HepG2 (cell line): ENCODE measurements at regions of chr1 and their contacts with region 1.

Region 1: DNA sequence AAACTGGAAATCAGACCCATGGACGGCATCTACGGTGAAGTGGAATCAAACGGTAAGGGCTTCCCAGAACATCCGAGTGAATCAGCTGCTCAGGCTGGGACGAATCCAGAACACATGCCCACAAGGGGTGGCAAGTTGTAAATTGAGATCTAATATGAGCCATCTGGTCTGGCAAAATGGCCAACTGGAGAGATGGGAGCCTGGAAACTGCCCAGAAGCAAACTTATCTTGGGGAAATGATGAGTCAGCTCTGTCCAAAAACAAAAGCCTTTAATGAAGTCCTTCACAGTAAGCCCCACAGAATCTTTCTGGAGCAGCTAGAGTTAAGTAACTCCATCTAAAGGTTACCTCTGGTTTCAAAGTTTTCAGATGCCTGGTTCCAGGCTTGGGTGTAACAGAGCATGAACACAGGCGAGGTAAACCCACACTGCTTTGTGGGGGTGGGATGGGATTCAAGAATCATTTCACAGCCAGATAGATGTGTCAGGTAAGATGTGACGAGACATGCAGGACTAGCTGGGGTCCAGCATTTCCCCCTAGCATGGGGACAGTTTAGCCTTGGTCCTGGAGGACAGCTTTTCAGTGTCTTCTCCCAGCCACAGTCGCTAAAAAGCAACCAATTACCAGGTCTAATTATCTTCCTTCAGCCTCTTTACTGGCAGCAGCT is 10.5 kb upstream of the SRP9 start:
- DNase-seq: peak; percentile 56
- ATAC-seq: peak; percentile 1; the same call in 2 of the 3 replicates
- H3K4me3 ChIP-seq: peak overlapping the region; percentile 14 to 69 (median 52)
- H3K27ac ChIP-seq: peak overlapping the region; percentile 79
- H3K4me1 ChIP-seq: peaks cover 90% of the 10 kb centered on the region
- H3K27me3 ChIP-seq: no peaks in the 10 kb centered on the region
- CTCF ChIP-seq: no peak
- EP300 ChIP-seq: no peak
- POLR2A ChIP-seq: peak in 1 of 2 experiments; percentile 50; a peak in 2 of 4 replicates
- RAD21 ChIP-seq: no peak

Region 2: GRCh38 chr1:225670806-225671733 is 96.0 kb before region 1 on chr1:
- CTCF ChIA-PET with region 1: no interaction called
- POLR2A ChIA-PET with region 1: interaction called, 19 read pairs
- in situ Hi-C with region 1: no loop called
- intact Hi-C with region 1: no loop called
- DNase-seq: peak; percentile 97
- ATAC-seq: peak; percentile 96
- H3K4me3 ChIP-seq: peak overlapping the region in 1 of 3 experiments; percentile 30; a peak in 1 of 6 replicates
- H3K27ac ChIP-seq: peak overlapping the region; percentile 63
- H3K4me1 ChIP-seq: peaks cover 27% of the 10 kb centered on the region
- H3K27me3 ChIP-seq: no peaks in the 10 kb centered on the region
- CTCF ChIP-seq: no peak
- EP300 ChIP-seq: peak; percentile 27 to 86; a peak in 3 of 4 replicates
- POLR2A ChIP-seq: peak in 1 of 2 experiments; percentile 35; a peak in 1 of 4 replicates
- RAD21 ChIP-seq: no peak

Region 3: GRCh38 chr1:225700164-225700740 is 66.8 kb before region 1 on chr1:
- CTCF ChIA-PET with region 1: no interaction called
- POLR2A ChIA-PET with region 1: interaction called, 49 read pairs
- in situ Hi-C with region 1: no loop called
- intact Hi-C with region 1: loop called (anchors 2 kb)
- DNase-seq: peak; percentile 100
- ATAC-seq: peak; percentile 90
- H3K4me3 ChIP-seq: peak overlapping the region in 2 of 3 experiments; percentile 14 to 26; a peak in 2 of 6 replicates
- H3K27ac ChIP-seq: peak overlapping the region; percentile 71
- H3K4me1 ChIP-seq: peaks cover 58% of the 10 kb centered on the region
- H3K27me3 ChIP-seq: no peaks in the 10 kb centered on the region
- CTCF ChIP-seq: no peak
- EP300 ChIP-seq: peak; percentile 55 to 91; a peak in 3 of 4 replicates
- POLR2A ChIP-seq: peak in 1 of 2 experiments; percentile 48; a peak in 1 of 4 replicates
- RAD21 ChIP-seq: no peak

Region 4: GRCh38 chr1:225746361-225747179 is 20.5 kb before region 1 on chr1:
- CTCF ChIA-PET with region 1: no interaction called
- POLR2A ChIA-PET with region 1: interaction called, 60 read pairs
- in situ Hi-C with region 1: no loop called
- intact Hi-C with region 1: no loop called
- DNase-seq: peak; percentile 85
- ATAC-seq: peak; percentile 98
- H3K4me3 ChIP-seq: peak overlapping the region; percentile 65 to 72 (median 66); a peak in 5 of 6 replicates
- H3K27ac ChIP-seq: peak overlapping the region; percentile 60
- H3K4me1 ChIP-seq: peaks cover 52% of the 10 kb centered on the region
- H3K27me3 ChIP-seq: no peaks in the 10 kb centered on the region
- CTCF ChIP-seq: peak; percentile 39; the same call in 1 of the 2 replicates
- EP300 ChIP-seq: no peak
- POLR2A ChIP-seq: peak in 1 of 2 experiments; percentile 60; a peak in 2 of 4 replicates
- RAD21 ChIP-seq: no peak

Region 5: DNA sequence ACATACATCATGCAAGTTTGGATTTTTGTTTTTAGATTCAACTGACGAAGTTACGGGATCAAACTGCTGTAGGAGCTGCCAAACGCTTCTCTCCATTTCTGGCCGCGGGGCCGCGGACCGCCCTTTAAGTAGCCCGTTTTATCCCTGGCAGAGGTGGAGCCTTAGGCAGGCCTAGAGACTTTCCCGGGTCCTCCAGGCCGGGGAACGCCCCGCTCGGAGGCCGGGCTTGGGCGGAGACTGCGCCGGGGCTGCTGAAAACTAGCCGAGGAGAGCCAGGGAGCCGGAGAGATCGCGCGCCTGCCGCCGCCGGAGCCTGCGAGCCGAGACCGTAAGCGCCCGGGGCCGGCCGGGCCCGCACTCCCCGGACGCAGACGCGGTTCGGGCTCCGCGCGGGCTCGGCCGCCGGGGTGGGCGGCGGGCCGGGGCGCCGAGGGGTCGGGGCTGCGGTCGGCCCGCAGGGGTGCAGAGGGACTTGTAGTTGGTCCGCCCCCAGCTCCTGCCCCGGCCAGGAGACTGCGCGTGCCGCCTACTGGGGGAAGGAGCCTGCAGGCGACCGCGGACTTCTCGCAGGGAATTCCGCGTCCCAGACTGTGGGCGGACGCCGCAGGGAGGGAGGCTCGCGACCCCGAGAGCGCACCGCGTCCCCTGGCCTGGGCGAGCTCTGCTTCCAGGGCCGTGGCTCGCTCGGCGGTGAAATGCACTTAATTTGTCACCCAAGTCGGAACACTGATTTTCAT is 42.9 kb after region 1 on chr1 and contains the start of gene EPHX1:
- CTCF ChIA-PET with region 1: no interaction called
- POLR2A ChIA-PET with region 1: interaction called, 14 read pairs
- in situ Hi-C with region 1: no loop called
- intact Hi-C with region 1: no loop called
- DNase-seq: peak; percentile 76
- ATAC-seq: peak; percentile 79
- H3K4me3 ChIP-seq: peak within 1 kb of the TSS; percentile 68 to 87 (median 80)
- H3K27ac ChIP-seq: peak within 1 kb of the TSS; percentile 69
- H3K4me1 ChIP-seq: peaks cover 54% of the 10 kb centered on the region
- H3K27me3 ChIP-seq: no peaks in the 10 kb centered on the region
- CTCF ChIP-seq: peak; percentile 52
- EP300 ChIP-seq: no peak
- POLR2A ChIP-seq: peak; percentile 65 to 91
- RAD21 ChIP-seq: peak; percentile 49
- total RNA-seq, gene EPHX1: 28.8 and 36.5 TPM in 2 replicates

Region 6: DNA sequence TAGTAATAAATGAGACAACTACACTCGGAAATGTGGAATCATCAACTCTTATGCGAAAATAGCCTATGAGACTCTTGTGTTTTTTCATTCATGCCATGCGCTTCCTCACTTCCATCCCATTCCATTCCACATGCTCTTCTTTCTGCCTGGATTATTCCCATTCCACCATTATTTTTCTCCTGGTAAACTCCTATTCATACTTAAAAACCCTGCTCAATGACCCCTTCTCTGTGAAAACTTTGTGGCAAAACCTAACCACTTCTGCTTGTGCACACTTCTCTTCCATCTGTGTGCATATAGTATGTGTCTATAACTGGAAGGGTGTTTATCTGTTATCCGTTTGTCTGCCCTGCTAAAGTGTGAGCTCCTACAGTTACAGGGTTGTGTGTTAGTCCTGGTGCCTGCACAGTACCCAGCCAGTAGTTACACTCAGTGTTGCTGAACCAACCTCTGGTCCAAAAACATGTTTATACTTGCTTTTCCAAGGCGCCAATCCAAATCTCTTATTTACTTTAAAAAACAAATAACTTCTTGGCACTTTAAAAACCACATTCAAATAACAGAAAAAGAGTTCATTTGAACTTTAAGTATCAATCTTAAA is 53.5 kb after region 1 on chr1:
- CTCF ChIA-PET with region 1: no interaction called
- POLR2A ChIA-PET with region 1: no interaction called
- in situ Hi-C with region 1: no loop called
- intact Hi-C with region 1: no loop called
- DNase-seq: no peak
- ATAC-seq: no peak
- H3K4me3 ChIP-seq: no peak overlapping the region
- H3K27ac ChIP-seq: no peak overlapping the region
- H3K4me1 ChIP-seq: peaks cover 96% of the 10 kb centered on the region
- H3K27me3 ChIP-seq: no peaks in the 10 kb centered on the region
- CTCF ChIP-seq: no peak
- EP300 ChIP-seq: no peak
- POLR2A ChIP-seq: no peak
- RAD21 ChIP-seq: no peak